HEK293T (cell line): ENCODE measurements at regions of chr1 and their contacts with region 1.

Region 1: DNA sequence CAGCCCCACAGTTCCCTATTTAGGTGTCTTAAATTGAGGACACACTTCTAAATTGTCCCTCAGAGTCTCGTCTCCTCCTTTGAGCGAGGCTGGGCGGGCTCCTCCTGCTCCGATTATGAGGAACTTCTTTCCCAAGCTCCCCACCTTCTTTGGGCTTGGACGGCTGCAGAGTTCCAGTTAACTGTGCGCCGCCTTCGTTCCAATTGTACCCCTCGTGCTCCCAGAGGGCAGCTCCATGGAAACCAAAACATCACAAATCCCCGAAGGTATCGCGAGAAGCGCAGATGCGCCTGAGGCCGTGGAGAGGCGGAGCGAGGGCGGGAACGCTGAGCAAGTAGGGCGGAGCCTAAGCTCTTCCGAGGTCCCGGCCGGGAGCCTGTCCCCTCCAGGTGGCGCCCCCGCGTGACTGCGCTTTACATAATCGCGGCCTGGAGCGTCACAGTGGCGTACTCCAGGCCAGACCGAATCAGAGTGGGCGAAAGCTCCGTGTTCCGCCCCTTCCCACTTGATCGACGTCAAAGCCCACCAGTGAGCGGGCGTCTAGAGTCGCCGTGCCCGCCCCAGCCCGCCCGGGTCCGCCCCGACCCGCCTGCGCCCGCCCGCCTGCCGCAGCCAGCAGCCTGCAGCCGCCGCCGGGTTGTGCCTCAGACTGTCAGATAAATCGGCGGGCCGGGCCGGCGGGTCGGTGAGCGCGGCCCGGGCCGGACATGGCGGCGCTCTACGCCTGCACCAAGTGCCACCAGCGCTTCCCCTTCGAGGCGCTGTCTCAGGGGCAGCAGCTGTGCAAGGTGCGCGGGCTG is at the start of gene FAM76A:
- DNase-seq: peak; percentile 100

Region 2: DNA sequence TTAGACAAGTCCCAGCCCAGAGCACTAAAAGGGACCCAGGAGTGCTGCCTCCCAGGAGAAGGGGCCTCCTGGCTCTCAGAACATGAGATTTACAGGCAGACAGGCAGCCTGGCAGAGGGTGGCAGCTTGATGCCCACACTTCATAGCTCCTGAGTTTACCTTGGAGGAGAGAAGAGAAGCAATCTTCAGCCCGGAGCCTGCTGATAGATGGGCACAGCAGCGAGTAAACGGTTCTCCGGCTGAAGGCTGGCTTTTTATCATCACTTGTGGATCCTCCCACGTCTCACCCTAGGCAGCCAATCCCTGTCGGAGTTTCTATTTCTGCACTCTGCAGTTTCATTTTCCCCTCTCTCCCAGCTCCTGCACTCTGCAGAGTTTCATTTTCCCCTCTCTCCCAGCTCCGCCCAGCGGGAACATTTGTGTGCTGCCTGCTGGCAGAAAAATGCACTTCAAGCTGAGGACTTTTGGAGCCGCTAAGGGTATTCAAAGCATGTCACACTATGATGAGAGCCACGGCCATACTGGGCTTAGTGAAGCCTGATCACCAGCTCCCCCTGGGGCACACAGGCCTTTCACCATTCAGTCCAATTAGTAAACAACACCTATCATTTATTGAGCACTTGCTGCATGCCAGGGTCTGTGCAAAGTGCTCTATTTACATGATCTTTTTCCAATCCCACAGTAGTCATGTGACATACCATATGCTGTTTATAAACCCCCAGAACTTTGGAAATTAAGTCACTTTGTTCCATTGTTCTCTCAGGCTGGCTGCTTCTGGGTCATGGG is 53.4 kb before region 1 on chr1 and contains the start of gene IFI6:
- CTCF ChIA-PET with region 1: interaction called, 8 read pairs
- POLR2A ChIA-PET with region 1: interaction called, 20 read pairs
- DNase-seq: peak; percentile 84